Breast epithelium (tissue), 4 donors: ENCODE measurements at regions of chr20 and their contacts with region 1.

Region 1: DNA sequence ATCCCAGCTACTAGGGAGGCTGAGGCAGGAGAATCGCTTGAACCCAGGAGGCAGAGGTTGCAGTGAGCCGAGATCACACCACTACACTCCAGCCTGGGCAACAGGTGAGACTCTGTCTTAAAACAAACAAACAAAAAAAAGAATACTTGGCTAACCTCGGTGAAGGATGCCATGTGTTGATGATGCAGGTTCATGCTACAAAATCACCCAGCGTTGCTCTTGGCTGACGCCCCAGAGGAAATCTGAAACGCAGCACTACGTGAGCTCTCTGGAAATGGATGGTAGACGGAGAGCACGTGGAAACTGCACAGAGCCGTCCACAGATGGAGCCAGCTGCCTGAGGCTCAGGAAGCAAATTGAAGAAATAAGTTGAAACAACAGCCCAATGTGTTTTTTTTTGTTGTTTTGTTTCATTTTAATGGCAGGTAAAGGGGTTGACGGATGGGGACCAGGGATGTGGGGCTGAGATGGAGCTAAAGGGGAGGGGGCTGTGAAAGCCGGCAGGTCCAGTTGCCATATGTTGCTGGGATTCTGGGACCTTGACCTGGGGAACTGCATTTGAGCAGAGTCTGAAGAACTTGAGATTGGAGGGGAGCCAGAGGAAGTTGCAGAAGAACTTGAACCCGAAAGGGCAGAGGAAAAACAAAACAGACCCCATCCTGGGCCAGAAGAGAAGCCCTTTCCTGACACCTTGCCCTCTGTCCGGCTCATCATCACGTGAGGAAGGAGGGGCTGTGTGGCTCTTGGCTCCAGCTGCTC is 12.8 kb upstream of the MANBAL start:
- DNase-seq: peak in 1 of 2 donors; percentile 49
- H3K4me3 ChIP-seq: peak overlapping the region in 1 of 3 donors; percentile 35
- H3K27ac ChIP-seq: peak overlapping the region in 1 of 2 donors; percentile 49
- H3K4me1 ChIP-seq: no peaks in the 10 kb centered on the region
- H3K27me3 ChIP-seq: no peaks in the 10 kb centered on the region
- CTCF ChIP-seq: no peak
- POLR2A ChIP-seq: no peak

Region 2: DNA sequence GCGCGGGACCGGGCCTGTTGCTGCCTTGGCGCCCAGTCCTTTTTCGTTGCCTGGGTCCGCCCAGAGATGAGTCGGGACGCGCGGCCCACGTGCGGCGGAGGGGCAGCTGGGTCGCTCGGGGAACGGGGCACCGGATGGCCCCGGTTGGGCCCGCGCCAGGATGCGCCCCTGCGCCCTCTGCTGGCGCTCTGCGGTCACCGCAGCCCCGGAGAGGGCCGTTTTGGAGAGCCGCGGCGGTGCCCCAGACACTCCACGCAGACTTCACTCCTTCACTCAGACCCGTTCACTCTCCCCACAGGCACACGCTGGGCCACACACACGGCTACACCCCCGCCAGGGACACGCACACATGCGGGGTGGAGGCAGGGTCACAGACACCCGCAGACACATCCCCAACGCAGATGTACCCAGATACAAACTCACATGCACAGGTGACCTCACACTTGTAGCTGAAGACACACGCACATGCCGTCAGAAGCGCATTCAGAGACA is 108.1 kb after region 1 on chr20:
- intact Hi-C with region 1: loop called (anchors 10 kb)
- DNase-seq: peak; percentile 45 to 61
- H3K4me3 ChIP-seq: peak overlapping the region; percentile 43 to 66 (median 48)
- H3K27ac ChIP-seq: no peak overlapping the region
- H3K4me1 ChIP-seq: no peaks in the 10 kb centered on the region
- H3K27me3 ChIP-seq: no peaks in the 10 kb centered on the region
- CTCF ChIP-seq: peak; percentile 64 to 90 (median 89)
- POLR2A ChIP-seq: no peak

Region 3: GRCh38 chr20:37534401-37535157 is 257.9 kb after region 1 on chr20:
- intact Hi-C with region 1: loop called (anchors 10 kb)
- DNase-seq: peak in 1 of 2 donors; percentile 37
- H3K4me3 ChIP-seq: no peak overlapping the region
- H3K27ac ChIP-seq: no peak overlapping the region
- H3K4me1 ChIP-seq: no peaks in the 10 kb centered on the region
- H3K27me3 ChIP-seq: no peaks in the 10 kb centered on the region
- CTCF ChIP-seq: peak; percentile 84 to 95 (median 88)
- POLR2A ChIP-seq: no peak